Activated CD4-positive, alpha-beta memory T cell treated with anti-CD3 and anti-CD28 coated beads, Interleukin-2, amount 10 ng/mL, durations not matched to agents 7 days and 5 days (primary cell): ENCODE measurements at regions of chr16 and their contacts with region 1.

Region 1: GRCh38 chr16:70770626-70771552 is 30.1 kb downstream of the VAC14 start:
- DNase-seq: peak; percentile 76
- H3K4me3 Mint-ChIP-seq: no peak overlapping the region
- H3K27ac Mint-ChIP-seq: peak overlapping the region; percentile 12
- H3K4me1 Mint-ChIP-seq: peaks cover 3% of the 10 kb centered on the region
- H3K27me3 Mint-ChIP-seq: no peaks in the 10 kb centered on the region

Region 2: GRCh38 chr16:70679666-70680494 is 91.0 kb before region 1 on chr16:
- CTCF ChIA-PET with region 1: interaction called, 28 read pairs
- POLR2A ChIA-PET with region 1: interaction called, 4 read pairs
- DNase-seq: no peak
- H3K4me3 Mint-ChIP-seq: no peak overlapping the region
- H3K27ac Mint-ChIP-seq: no peak overlapping the region
- H3K4me1 Mint-ChIP-seq: peaks cover 7% of the 10 kb centered on the region
- H3K27me3 Mint-ChIP-seq: peaks cover 6% of the 10 kb centered on the region

Region 3: DNA sequence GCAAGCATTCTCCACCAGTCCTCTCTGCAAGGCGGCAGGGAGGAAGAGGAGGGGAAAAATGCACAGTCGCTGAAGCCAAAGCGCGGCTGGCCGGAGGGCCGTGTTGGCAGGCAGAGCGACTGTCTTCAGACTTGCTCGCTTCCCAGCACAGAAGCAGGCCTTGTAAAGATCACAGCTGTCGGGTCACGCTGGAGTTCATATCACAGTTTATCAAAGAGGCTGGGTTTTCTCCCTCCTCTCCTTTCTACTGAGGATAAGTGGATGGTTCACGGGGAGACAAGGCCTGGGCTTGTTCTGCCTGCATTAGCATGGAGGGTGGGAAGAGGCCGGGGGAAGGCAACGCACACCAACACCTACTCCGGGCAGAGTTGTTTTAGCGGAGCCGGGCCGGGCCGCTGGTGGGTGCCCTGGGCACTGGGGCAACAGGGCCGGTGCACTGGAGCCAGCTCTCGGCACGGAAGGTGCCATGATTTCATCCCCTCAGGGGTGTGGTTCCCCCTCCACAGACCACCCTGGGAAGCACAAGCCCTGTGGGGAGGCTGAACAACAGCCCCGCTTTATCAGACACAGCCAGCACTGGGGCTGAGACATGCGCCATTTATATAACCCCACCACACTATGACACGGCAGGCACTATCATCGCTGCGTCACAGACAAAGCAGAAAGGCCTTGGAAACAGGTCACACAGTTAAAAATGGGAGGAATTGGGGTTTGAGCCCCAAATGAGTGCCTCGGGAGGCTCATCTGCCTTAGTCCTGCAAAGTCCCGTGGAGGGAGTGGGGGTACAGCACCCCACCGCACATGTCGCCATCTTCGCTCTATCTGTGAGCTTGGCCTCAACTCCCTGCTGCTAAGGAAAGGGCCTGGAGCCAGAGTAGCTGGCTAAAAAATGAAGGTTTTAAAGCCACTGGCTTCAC is 44.7 kb before region 1 on chr16:
- CTCF ChIA-PET with region 1: no interaction called
- POLR2A ChIA-PET with region 1: no interaction called
- DNase-seq: no peak
- H3K4me3 Mint-ChIP-seq: no peak overlapping the region
- H3K27ac Mint-ChIP-seq: no peak overlapping the region
- H3K4me1 Mint-ChIP-seq: no peaks in the 10 kb centered on the region
- H3K27me3 Mint-ChIP-seq: no peaks in the 10 kb centered on the region

Region 4: DNA sequence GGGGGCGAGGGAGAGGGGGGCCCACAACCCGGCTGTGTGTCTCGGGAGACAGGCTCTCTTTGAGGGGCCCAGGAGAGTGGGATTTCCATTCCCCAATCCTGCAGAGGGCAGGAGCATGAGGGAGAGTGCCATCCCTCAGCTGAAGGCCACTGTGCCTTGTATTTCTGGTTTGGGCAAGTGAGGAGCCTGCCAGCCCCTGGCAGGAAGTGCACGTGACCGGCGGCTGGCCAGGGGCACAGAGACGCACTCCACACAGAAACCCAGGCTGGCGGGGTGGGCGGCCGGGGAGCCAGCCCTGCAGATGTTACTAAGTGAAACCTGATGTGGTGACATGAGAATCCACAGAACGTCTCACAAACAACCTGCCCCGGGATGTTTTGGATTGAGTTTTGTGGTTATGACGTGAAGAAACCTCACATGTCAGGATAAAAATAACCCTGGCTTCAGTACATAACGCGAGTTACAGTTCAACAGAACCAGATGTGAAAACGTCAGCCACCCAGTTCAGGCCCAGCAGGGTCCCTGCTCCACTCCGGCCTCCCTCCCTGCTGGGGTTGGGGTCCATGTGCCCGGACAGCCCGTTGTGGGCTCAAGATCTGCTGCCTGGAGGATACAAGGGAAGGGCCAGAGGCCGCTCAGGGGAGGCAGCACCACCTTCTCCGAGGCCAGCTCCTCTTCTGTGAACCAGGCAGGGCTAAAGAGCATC is 33.4 kb before region 1 on chr16:
- CTCF ChIA-PET with region 1: interaction called, 14 read pairs
- POLR2A ChIA-PET with region 1: interaction called, 3 read pairs
- DNase-seq: peak; percentile 88
- H3K4me3 Mint-ChIP-seq: peak overlapping the region; percentile 59
- H3K27ac Mint-ChIP-seq: peak overlapping the region; percentile 99
- H3K4me1 Mint-ChIP-seq: peaks cover 63% of the 10 kb centered on the region
- H3K27me3 Mint-ChIP-seq: no peaks in the 10 kb centered on the region

Region 5: GRCh38 chr16:70759666-70760065 is 11.2 kb before region 1 on chr16:
- CTCF ChIA-PET with region 1: interaction called, 28 read pairs
- POLR2A ChIA-PET with region 1: no interaction called
- DNase-seq: no peak
- H3K4me3 Mint-ChIP-seq: no peak overlapping the region
- H3K27ac Mint-ChIP-seq: no peak overlapping the region
- H3K4me1 Mint-ChIP-seq: peaks cover 4% of the 10 kb centered on the region
- H3K27me3 Mint-ChIP-seq: no peaks in the 10 kb centered on the region